ENCODE measurements at regions of chr7 and their contacts with region 1.

Region 1: DNA sequence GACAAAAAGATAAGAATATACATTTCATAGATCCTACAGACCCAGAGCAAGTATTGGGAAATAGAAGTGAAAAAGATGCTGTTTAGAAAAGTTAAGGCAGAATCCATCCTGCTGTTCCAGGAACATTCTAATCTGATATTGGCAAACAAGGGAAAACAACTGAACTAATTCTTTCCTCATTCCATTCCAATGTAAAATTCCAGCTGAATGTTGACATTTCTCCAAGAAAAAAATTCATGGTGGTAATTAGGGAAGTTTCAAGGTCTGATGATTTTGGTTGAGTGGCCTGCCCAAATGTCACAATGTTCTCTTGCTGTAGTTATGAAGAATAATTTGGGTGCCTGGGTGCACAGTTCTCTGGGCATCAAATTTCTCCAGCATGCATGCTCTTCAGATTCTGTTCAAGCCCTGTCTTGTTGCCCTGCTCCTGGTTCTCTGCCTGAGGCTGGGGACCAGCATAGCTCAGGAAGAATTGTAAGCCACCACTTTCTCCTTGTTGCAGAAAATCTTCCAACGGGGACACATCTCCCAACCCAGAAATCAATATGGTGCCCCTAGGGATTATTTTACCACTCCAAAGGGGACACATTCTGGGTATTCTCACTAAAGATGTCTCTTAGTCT is 15.3 kb downstream of the PIP start:
- DNase-seq: no peak
- H3K4me3 ChIP-seq: no peak overlapping the region
- CTCF ChIP-seq: no peak
- POLR2A ChIP-seq: no peak

Region 2: GRCh38 chr7:143008007-143008901 is 138.9 kb before region 1 on chr7:
- intact Hi-C with region 1: no loop called
- DNase-seq: peak; percentile 77 to 96
- H3K4me3 ChIP-seq: no peak overlapping the region
- CTCF ChIP-seq: peak in 1 of 3 donors; percentile 79
- POLR2A ChIP-seq: no peak

Region 3: DNA sequence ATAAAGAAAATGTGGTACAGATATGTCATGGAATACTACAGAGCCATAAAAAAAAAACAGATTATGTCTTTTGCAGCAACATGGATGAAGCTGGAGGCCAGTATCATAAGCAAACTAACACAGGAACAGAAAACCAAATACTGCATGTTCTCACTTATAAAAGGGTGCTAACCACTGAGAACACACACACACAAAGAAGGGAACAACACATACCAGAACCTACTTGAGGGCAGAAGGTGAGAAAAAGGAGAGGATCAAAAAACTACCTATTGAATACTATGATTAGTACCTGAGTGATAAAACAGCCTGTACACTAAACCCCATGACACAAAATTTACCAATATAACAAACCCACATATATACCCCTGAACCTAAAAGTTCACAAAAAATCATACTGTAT is 1544.1 kb after region 1 on chr7:
- intact Hi-C with region 1: loop called (anchors 5 kb)
- DNase-seq: no peak
- H3K4me3 ChIP-seq: no peak overlapping the region
- CTCF ChIP-seq: no peak
- POLR2A ChIP-seq: no peak

Measured in lower leg skin (tissue), 4 donors.